ENCODE measurements at regions of chr1 and their contacts with region 1.

Region 1: GRCh38 chr1:153990468-153991150 is at the start of gene RPS27:
- DNase-seq: peak; percentile 91
- ATAC-seq: peak; percentile 78 to 84
- total RNA-seq, gene RPS27: 949 to 1,289 TPM

Region 2: DNA sequence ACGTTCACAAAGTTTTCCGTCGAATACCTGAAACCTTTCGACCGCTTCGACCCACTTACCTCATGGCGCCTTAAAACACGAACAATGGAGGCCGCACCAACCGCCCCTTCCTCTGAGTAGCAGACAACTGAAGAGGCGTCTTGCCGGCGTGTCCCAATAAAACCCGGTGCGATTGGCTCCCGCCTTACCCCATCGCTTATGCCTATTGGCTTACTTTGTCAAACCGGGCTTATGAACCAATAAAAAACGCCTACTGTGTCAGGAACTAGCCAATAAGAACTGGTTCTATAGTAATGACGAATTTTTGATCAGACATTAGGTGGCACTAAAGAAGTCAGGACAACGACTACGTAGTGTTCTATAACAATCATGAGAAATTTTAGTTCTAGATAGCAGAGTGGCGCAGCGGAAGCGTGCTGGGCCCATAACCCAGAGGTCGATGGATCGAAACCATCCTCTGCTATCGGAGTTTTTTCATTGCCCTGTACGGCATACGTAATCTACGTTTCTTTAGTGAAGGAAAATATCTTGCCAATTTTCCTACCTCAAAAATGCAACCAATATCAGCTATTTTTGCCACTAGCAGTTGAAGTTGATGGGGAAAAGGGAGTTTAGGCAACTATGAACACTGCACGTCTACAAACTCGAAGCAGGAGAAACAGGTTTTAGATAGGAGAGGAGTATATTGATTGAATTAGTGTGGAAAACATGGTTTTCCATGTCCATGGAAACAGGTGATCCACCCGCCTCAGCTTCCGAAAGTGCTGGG is 319.6 kb before region 1 on chr1 and contains the start of gene ILF2:
- intact Hi-C with region 1: loop called (anchors 5 to 10 kb)
- DNase-seq: peak; percentile 97
- ATAC-seq: peak; percentile 96 to 97
- total RNA-seq, gene ILF2: 63.7 to 91.7 TPM

Region 3: GRCh38 chr1:153677718-153678505 is 312.7 kb before region 1 on chr1:
- intact Hi-C with region 1: loop called (anchors 5 to 10 kb)
- DNase-seq: peak; percentile 58
- ATAC-seq: peak; percentile 64 to 66

Region 4: DNA sequence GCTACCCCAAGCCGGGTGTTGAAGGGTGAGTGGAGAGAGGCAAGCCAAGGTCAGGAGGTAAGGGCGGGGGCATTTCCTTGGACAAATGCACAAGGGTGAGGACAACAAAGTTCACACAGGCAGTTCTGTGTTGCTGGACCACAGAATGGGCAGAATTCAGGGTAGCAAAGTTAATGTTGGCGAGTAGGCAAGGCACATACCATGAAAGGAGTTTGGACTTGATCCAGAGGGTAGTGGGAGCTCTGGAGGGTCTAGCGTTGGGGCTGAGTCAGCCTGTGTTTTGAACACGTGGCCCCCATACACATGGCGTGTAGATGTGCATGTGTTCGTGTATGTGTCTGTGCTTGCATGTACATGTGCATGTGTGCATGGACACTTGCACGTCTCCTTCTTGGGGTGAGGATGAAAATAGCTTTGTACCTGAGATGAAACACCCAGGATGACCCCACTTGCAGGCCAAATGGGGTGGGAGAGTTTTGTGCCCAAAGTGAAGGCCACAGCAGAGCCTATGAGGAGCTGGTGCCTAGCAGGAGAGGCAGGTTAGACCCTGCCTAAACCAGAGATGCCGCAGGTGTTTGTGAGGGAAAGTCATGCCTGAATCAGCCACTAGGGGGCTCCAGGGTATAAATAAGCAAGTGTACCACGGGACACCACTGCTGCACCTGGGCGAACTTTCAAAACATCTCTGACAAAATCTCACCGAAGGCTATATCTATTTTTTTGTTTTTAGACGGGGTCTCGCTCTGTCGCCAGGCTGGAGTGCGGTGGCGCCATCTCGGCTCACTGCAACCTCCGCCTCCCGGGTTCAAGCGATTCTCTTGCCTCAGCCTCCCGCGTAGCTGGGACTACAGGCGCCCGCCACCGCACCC is 193.6 kb before region 1 on chr1:
- intact Hi-C with region 1: loop called (anchors 2 to 5 kb)
- DNase-seq: peak; percentile 82
- ATAC-seq: peak; percentile 58 to 64

Region 5: DNA sequence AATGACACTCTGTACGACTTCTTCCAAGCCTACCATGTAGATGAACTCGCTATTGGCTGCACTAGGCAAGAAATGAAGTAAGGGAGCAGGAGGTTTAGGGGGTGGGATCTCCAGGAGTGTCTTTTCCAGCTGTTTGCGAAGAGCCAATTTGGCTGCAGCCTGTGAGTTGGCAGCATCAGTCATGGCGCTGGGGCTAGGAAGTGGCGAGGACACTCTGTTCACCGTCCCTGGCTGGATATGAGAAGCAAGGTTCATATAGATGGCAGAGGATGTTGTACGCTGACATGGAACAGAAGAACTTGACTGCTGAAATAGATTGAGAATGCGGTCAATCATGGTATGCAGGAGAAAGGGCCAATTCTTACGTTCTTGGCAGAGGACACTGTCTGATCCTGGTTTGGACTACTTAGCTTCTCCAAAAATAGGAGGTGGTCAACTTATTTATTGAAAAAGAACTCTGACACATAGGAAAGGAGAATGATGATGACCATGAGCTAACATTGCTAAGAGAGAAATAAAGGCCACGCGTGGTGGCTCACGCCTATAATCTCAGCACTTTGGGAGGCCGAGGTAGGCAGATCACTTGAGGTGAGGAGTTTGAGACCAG is 174.2 kb before region 1 on chr1:
- intact Hi-C with region 1: no loop called
- DNase-seq: no peak
- ATAC-seq: peak; percentile 34 to 45

Region 6: GRCh38 chr1:153903841-153904455 is 86.7 kb before region 1 on chr1:
- intact Hi-C with region 1: no loop called
- DNase-seq: no peak
- ATAC-seq: peak; percentile 19 to 41

Region 7: DNA sequence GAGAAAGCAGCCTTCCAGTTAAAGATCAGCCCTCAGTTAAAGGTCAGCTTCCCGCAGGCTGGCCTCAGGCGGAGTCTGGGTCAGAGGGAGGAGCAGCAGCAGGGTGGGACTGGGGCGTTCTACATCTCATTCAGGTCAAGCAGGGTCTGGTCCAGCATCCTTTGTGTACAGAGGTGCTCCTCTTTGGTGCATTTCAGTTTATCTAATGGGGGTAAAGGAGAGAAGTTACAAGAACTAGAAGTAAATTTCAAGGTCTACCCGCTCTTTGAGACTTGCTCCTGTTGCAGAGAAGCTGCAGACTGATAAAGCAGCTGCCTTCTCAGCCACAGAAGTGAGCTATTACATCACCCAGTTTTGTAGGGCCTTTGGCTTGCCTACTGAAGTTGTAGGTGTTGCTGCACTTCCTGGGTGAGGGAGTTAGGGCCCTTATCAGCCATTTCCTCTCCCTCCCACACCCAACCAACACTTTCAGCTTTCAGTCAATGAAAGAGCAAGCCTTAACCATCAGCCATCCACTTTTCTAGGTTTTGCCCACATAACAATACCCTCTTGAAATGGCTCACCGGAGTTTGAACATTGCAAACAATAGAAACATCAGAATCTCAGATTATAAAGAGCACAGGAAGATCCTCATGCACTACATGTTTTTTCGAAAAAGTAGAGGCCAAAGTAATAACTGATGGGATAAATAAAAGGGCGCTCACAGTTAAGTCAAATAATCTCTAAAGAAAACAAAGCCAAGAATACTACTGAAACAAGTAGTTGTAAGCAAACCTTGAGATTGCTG is 167.1 kb after region 1 on chr1:
- intact Hi-C with region 1: loop called in 1 of 2 experiments (anchors 10 kb)
- DNase-seq: no peak
- ATAC-seq: peak; percentile 67 to 76

Region 8: GRCh38 chr1:154567386-154568156 is 577.0 kb after region 1 on chr1 and contains the start of gene CHRNB2:
- intact Hi-C with region 1: no loop called
- DNase-seq: peak; percentile 73
- ATAC-seq: peak; percentile 97 to 99
- total RNA-seq, gene CHRNB2: 0.05 TPM in 1 of 2 donors, not detected in the other

Measured in left cardiac atrium (tissue), 4 donors.